ENCODE measurements at regions of chr17 and their contacts with region 1.

Region 1: DNA sequence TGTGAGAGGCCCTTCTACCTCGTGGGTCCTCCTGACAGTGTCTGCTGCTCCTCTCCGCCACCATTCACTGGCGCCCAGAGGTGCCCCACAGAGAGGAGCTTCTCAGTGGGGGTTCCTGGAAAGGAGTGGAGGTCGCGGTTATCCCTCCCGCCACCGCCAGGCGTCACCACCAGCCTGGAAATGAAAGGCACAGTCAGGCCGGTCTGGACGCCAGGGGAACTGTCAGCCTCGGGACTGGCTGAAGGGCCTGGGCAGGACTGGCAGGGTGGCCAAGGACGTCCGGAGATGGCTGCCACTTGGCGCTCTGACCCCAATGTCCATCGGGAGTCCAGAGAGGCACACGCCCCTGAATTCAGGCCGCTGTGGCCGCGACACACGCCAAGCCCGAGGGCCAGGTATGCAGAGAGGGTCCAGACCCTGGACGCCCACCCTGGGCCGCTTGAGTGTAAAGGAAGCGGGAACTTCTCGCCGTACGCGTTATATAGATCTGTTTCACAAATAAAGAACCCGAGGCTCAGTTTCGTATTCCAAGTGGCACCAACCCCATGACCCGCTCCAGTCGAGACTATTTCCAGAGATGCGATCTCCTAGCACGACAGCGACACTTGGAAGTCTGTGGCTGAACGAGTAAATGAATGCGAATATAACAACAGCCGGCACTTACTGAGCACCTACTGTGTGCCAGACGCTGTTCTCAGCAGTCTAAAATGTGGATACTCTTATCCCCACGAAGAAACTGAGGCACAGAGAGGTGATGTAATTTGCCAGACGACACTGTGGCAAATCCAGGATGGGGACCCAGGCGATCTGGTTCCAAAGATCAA is 7.6 kb upstream of the NXPH3 start:
- DNase-seq: peak; percentile 91
- ATAC-seq: peak; percentile 49
- H3K4me3 Mint-ChIP-seq: peak overlapping the region; percentile 56
- H3K27ac Mint-ChIP-seq: no peak overlapping the region
- H3K4me1 Mint-ChIP-seq: peaks cover 14% of the 10 kb centered on the region
- H3K27me3 Mint-ChIP-seq: peaks cover 19% of the 10 kb centered on the region

Region 2: GRCh38 chr17:49694847-49695683 is 127.0 kb after region 1 on chr17:
- CTCF ChIA-PET with region 1: interaction called, 458 read pairs
- POLR2A ChIA-PET with region 1: interaction called, 4 read pairs
- intact Hi-C with region 1: loop called (anchors 1 kb)
- DNase-seq: peak; percentile 85
- ATAC-seq: no peak
- H3K4me3 Mint-ChIP-seq: no peak overlapping the region
- H3K27ac Mint-ChIP-seq: peak overlapping the region; percentile 90
- H3K4me1 Mint-ChIP-seq: peaks cover 36% of the 10 kb centered on the region
- H3K27me3 Mint-ChIP-seq: no peaks in the 10 kb centered on the region

Region 3: GRCh38 chr17:49779739-49780231 is 211.7 kb after region 1 on chr17:
- CTCF ChIA-PET with region 1: interaction called, 6 read pairs
- POLR2A ChIA-PET with region 1: no interaction called
- intact Hi-C with region 1: loop called in 1 of 2 experiments (anchors 2 kb)
- DNase-seq: peak; percentile 35
- ATAC-seq: peak; percentile 71
- H3K4me3 Mint-ChIP-seq: no peak overlapping the region
- H3K27ac Mint-ChIP-seq: no peak overlapping the region
- H3K4me1 Mint-ChIP-seq: peaks cover 8% of the 10 kb centered on the region
- H3K27me3 Mint-ChIP-seq: no peaks in the 10 kb centered on the region

Region 4: DNA sequence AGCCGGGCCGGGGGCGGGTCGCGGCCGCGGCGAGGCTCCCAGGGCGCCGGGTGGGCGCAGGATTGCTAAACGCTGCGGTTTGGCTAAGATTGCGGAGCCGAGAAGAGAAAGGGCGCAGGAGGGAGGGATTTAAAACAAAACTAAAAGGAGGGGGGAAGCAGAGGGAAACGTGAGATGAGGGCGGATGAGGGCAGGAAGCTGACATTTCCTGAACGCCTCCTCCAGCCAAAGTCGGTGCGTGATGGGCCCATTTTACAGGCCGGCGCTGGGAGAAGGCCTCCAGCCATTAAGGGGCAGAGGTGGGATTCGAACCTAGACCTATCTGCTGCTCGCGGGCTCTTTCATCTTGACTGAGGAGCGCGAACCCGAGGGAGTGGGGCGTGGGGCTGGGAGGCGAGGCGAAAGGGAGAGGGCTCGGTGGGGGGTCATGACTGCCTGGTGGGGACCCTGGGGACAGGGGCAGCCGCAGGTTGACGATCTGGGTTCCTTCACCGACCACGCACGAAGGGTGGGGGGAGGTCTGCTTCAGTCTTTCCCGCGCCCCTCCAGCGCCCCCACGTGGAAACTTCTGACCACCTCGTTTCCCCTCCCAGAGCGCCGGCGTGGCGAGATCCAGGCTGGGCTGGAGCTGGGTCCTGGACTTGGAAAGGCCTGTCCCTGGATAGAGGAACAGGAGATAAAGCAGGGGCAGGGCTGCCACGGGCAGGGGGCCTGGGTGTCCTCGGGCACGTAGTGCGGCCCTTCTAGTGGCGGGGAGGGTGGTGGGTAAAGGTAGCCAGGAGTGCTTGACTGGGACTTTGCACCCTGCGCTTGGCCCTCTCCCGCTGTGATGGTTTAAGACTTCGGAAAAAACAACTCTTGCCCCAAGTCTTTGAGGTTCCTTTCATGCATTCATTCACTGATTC is 283.6 kb after region 1 on chr17:
- CTCF ChIA-PET with region 1: interaction called, 4 read pairs
- POLR2A ChIA-PET with region 1: no interaction called
- intact Hi-C with region 1: loop called (anchors 1 to 2 kb)
- DNase-seq: peak; percentile 83
- ATAC-seq: peak; percentile 74
- H3K4me3 Mint-ChIP-seq: peak overlapping the region; percentile 76
- H3K27ac Mint-ChIP-seq: peak overlapping the region; percentile 84
- H3K4me1 Mint-ChIP-seq: peaks cover 13% of the 10 kb centered on the region
- H3K27me3 Mint-ChIP-seq: peaks cover 1% of the 10 kb centered on the region

Measured in activated CD4-positive, alpha-beta T cell treated with anti-CD3 and anti-CD28 coated beads for 36 hours (primary cell).